B cell (primary cell): ENCODE measurements at regions of chr2 and their contacts with region 1.

Region 1: GRCh38 chr2:9423100-9423921 is at the starts of genes CPSF3 and ITGB1BP1:
- DNase-seq: peak; percentile 98
- ATAC-seq: peak; percentile 85
- H3K4me3 ChIP-seq: peak within 1 kb of the TSS; percentile 67 to 98 (median 88)
- H3K4me3 Mint-ChIP-seq: no peak within 1 kb of the TSS
- H3K27ac ChIP-seq: peak within 1 kb of the TSS; percentile 69 to 84
- H3K27ac Mint-ChIP-seq: peak within 1 kb of the TSS; percentile 92
- H3K4me1 ChIP-seq: peaks cover 20 to 29% of the 10 kb centered on the region in 2 donors
- H3K4me1 Mint-ChIP-seq: peaks cover 29% of the 10 kb centered on the region
- H3K27me3 ChIP-seq: no peaks in the 10 kb centered on the region
- H3K27me3 Mint-ChIP-seq: no peaks in the 10 kb centered on the region
- CTCF ChIP-seq: no peak
- total RNA-seq, gene CPSF3: 28.0 and 28.4 TPM in 2 replicates
- total RNA-seq, gene ITGB1BP1: 42.8 and 47.1 TPM in 2 replicates

Region 2: GRCh38 chr2:8836971-8837794 is 586.1 kb before region 1 on chr2 and contains the start of gene KIDINS220:
- CTCF ChIA-PET with region 1: no interaction called
- POLR2A ChIA-PET with region 1: no interaction called
- intact Hi-C with region 1: loop called (anchors 2 kb)
- DNase-seq: peak; percentile 92
- ATAC-seq: peak; percentile 98
- H3K4me3 ChIP-seq: peak within 1 kb of the TSS; percentile 36 to 93 (median 84)
- H3K4me3 Mint-ChIP-seq: peak within 1 kb of the TSS; percentile 98
- H3K27ac ChIP-seq: peak within 1 kb of the TSS; percentile 36 to 75
- H3K27ac Mint-ChIP-seq: peak within 1 kb of the TSS; percentile 98
- H3K4me1 ChIP-seq: peaks cover 24 to 25% of the 10 kb centered on the region in 2 donors
- H3K4me1 Mint-ChIP-seq: peaks cover 36% of the 10 kb centered on the region
- H3K27me3 ChIP-seq: no peaks in the 10 kb centered on the region
- H3K27me3 Mint-ChIP-seq: peaks cover 4% of the 10 kb centered on the region
- CTCF ChIP-seq: no peak
- total RNA-seq, gene KIDINS220: 36.6 and 43.6 TPM in 2 replicates

Region 3: DNA sequence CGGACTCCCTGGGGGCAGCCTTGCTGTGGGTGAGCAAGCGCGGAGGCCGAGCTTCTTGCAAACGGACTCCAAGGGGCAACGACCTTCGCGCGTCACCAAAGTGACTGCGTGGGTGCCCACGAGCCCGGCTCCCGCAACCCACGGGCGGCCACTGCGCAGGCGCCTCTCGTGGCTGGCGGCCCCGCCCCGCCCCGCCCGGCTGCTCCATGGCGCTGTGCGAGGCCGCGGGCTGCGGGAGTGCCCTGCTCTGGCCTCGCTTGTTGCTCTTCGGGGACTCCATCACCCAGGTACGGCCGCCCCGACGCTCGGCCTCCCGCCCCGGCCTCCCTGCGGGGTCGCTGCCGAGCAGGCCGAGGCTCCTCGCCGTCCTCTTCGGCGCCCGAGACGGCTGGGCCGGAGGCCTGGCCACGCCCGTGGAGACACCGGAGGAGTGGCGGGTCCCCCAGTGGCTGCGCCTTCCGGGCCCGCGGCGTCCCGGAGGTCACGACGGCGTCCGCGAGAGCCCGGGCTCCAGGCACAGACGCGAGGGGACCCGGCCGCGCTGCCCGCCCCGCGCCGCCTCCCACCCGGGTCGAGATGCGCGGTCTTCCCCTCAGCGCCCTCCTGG is 51.2 kb after region 1 on chr2 and contains the start of gene IAH1:
- CTCF ChIA-PET with region 1: no interaction called
- POLR2A ChIA-PET with region 1: no interaction called
- intact Hi-C with region 1: loop called (anchors 1 kb)
- DNase-seq: peak; percentile 89
- ATAC-seq: peak; percentile 82
- H3K4me3 ChIP-seq: peak within 1 kb of the TSS; percentile 61 to 85 (median 68)
- H3K4me3 Mint-ChIP-seq: peak within 1 kb of the TSS; percentile 84
- H3K27ac ChIP-seq: peak within 1 kb of the TSS; percentile 62 to 66
- H3K27ac Mint-ChIP-seq: peak within 1 kb of the TSS; percentile 88
- H3K4me1 ChIP-seq: peaks cover 21 to 29% of the 10 kb centered on the region in 2 donors
- H3K4me1 Mint-ChIP-seq: peaks cover 40% of the 10 kb centered on the region
- H3K27me3 ChIP-seq: no peaks in the 10 kb centered on the region
- H3K27me3 Mint-ChIP-seq: no peaks in the 10 kb centered on the region
- CTCF ChIP-seq: no peak
- total RNA-seq, gene IAH1: 47.1 and 54.8 TPM in 2 replicates

Region 4: DNA sequence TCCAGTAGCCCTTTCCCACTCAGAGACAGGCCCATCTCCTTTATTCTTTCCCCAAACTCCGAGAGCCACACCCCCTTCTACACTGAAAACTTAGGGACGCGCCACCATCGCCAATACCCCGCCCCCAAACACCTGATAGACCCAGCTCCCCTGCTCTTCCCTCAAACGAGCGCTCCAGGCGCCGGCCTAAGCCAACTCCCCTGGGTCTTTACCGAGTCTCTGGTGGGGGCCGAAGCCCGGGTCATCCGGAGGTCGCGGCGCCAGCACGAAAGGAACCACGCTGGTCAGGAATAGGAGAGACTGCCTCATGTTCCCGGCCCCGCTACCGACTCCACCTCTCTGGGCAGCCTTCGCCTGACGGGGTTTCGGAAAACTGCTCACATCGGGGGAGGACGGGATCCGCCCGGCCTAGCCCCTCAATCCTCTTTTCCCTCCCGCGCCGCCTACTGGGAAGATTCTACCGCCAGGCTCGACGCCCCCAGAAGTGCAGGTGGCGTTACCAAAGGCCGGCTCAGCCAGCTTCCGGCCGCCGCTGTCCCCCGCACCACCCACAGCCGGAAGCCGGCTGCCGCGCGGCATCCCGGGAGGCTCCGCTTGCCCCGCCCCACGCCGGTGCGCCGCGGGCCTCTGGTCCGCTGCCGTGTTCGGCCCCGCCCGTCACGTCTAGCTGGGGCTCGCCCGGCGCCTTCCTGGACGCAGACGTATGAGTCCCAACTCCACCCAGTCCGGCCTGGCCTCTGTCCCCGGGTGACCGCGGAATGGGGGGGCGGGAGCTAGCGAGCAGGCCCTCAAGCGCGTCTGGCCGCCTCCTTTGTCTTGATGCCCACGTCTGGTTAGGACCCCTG is 132.2 kb after region 1 on chr2 and contains the start of gene ADAM17:
- CTCF ChIA-PET with region 1: no interaction called
- POLR2A ChIA-PET with region 1: interaction called, 10 read pairs
- intact Hi-C with region 1: loop called (anchors 1 kb)
- DNase-seq: peak; percentile 94
- ATAC-seq: peak; percentile 91
- H3K4me3 ChIP-seq: peak within 1 kb of the TSS; percentile 74 to 99 (median 98)
- H3K4me3 Mint-ChIP-seq: peak within 1 kb of the TSS; percentile 98
- H3K27ac ChIP-seq: peak within 1 kb of the TSS; percentile 92 to 93
- H3K27ac Mint-ChIP-seq: peak within 1 kb of the TSS; percentile 99
- H3K4me1 ChIP-seq: peaks cover 41 to 44% of the 10 kb centered on the region in 2 donors
- H3K4me1 Mint-ChIP-seq: peaks cover 47% of the 10 kb centered on the region
- H3K27me3 ChIP-seq: no peaks in the 10 kb centered on the region
- H3K27me3 Mint-ChIP-seq: no peaks in the 10 kb centered on the region
- CTCF ChIP-seq: peak; percentile 33
- total RNA-seq, gene ADAM17: 57.8 and 60.5 TPM in 2 replicates

Region 5: DNA sequence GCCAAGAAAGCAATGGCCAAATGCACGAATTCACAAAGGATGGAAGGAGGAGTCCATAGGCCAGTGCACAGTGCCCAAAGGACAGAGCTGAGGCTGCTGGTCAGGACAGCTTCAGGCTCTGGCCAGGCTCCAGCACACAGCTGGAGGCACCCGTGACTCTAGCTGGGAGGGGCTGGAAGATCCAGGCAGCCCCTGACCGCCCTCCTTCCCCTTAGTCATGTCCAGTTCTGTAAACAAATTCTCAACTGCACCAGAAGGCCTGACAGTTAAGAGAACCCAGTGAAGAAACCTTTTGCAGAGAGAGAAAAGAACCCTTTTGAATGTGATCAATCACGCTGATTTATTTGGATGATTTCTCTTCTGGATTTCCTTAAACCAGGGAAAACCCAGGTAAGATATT is 215.2 kb after region 1 on chr2:
- CTCF ChIA-PET with region 1: no interaction called
- POLR2A ChIA-PET with region 1: no interaction called
- intact Hi-C with region 1: no loop called
- DNase-seq: no peak
- ATAC-seq: no peak
- H3K4me3 ChIP-seq: no peak overlapping the region
- H3K4me3 Mint-ChIP-seq: no peak overlapping the region
- H3K27ac ChIP-seq: no peak overlapping the region
- H3K27ac Mint-ChIP-seq: no peak overlapping the region
- H3K4me1 ChIP-seq: peaks cover 0 to 5% of the 10 kb centered on the region in 2 donors
- H3K4me1 Mint-ChIP-seq: peaks cover 15% of the 10 kb centered on the region
- H3K27me3 ChIP-seq: no peaks in the 10 kb centered on the region
- H3K27me3 Mint-ChIP-seq: peaks cover 14% of the 10 kb centered on the region
- CTCF ChIP-seq: no peak

Region 6: DNA sequence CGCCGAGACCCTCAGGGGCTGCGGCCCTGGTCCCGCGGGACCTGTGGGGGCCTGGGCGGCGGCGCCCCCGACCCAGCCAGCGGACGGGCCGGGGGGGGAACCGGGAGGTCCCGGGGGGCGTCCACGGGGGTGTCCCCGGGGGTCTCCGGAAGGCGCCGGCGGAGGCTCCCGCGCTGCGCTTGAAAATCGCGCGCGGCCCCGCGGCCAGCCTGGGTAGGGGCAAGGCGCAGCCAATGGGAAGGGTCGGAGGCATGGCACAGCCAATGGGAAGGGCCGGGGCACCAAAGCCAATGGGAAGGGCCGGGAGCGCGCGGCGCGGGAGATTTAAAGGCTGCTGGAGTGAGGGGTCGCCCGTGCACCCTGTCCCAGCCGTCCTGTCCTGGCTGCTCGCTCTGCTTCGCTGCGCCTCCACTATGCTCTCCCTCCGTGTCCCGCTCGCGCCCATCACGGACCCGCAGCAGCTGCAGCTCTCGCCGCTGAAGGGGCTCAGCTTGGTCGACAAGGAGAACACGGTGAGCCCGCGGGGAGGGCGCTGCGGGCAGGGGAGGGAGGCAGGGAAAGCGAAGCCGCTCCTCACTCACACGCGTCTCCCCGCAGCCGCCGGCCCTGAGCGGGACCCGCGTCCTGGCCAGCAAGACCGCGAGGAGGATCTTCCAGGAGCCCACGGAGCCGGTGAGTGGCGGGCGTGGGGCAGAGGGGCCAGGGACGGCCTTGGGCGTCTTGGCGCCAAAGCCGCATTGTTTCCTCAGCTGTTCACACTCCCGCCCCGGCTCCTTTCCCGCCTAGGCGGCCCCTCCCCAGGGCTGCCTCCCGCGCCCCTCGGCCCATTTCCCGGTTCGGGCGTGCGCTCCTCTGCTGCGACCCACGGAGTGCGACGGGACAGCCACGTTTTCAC is 699.3 kb after region 1 on chr2 and contains the start of gene RRM2:
- CTCF ChIA-PET with region 1: no interaction called
- POLR2A ChIA-PET with region 1: no interaction called
- intact Hi-C with region 1: loop called (anchors 5 kb)
- DNase-seq: peak; percentile 91
- ATAC-seq: peak; percentile 82
- H3K4me3 ChIP-seq: peak within 1 kb of the TSS in 4 of 5 experiments; percentile 42 to 77 (median 54)
- H3K4me3 Mint-ChIP-seq: peak within 1 kb of the TSS; percentile 98
- H3K27ac ChIP-seq: no peak within 1 kb of the TSS
- H3K27ac Mint-ChIP-seq: peak within 1 kb of the TSS; percentile 59
- H3K4me1 ChIP-seq: peaks cover 29 to 32% of the 10 kb centered on the region in 2 donors
- H3K4me1 Mint-ChIP-seq: peaks cover 30% of the 10 kb centered on the region
- H3K27me3 ChIP-seq: peaks cover 0 to 17% (median 8%) of the 10 kb centered on the region in 4 experiments
- H3K27me3 Mint-ChIP-seq: peaks cover 10% of the 10 kb centered on the region
- CTCF ChIP-seq: no peak
- total RNA-seq, gene RRM2: 1.2 and 1.3 TPM in 2 replicates

Region 7: GRCh38 chr2:11145350-11145749 is 1722.0 kb after region 1 on chr2:
- CTCF ChIA-PET with region 1: no interaction called
- POLR2A ChIA-PET with region 1: interaction called, 10 read pairs
- intact Hi-C with region 1: no loop called
- DNase-seq: no peak
- ATAC-seq: peak; percentile 17
- H3K4me3 ChIP-seq: no peak overlapping the region
- H3K4me3 Mint-ChIP-seq: no peak overlapping the region
- H3K27ac ChIP-seq: no peak overlapping the region
- H3K27ac Mint-ChIP-seq: no peak overlapping the region
- H3K4me1 ChIP-seq: peaks cover 0 to 4% of the 10 kb centered on the region in 2 donors
- H3K4me1 Mint-ChIP-seq: peaks cover 5% of the 10 kb centered on the region
- H3K27me3 ChIP-seq: no peaks in the 10 kb centered on the region
- H3K27me3 Mint-ChIP-seq: peaks cover 17% of the 10 kb centered on the region
- CTCF ChIP-seq: no peak